ENCODE measurements at regions of chr19 and their contacts with region 1.

Region 1: GRCh38 chr19:41353466-41354342 is at the start of gene TGFB1:
- DNase-seq: peak; percentile 94
- H3K4me3 Mint-ChIP-seq: peak within 1 kb of the TSS; percentile 95
- H3K27ac Mint-ChIP-seq: peak within 1 kb of the TSS; percentile 94
- H3K4me1 Mint-ChIP-seq: peaks cover 58% of the 10 kb centered on the region
- H3K27me3 Mint-ChIP-seq: no peaks in the 10 kb centered on the region
- total RNA-seq, gene TGFB1: 108 to 110 TPM

Region 2: GRCh38 chr19:41310033-41310758 is 43.5 kb before region 1 on chr19 and contains the start of gene CCDC97:
- CTCF ChIA-PET with region 1: interaction called, 19 read pairs
- POLR2A ChIA-PET with region 1: interaction called, 4 read pairs
- intact Hi-C with region 1: loop called (anchors 1 kb)
- DNase-seq: peak; percentile 92
- H3K4me3 Mint-ChIP-seq: peak within 1 kb of the TSS; percentile 96
- H3K27ac Mint-ChIP-seq: peak within 1 kb of the TSS; percentile 96
- H3K4me1 Mint-ChIP-seq: peaks cover 65% of the 10 kb centered on the region
- H3K27me3 Mint-ChIP-seq: no peaks in the 10 kb centered on the region
- total RNA-seq, gene CCDC97: 20.5 to 23.4 TPM

Region 3: GRCh38 chr19:41327576-41328156 is 26.0 kb before region 1 on chr19:
- CTCF ChIA-PET with region 1: interaction called, 24 read pairs
- POLR2A ChIA-PET with region 1: interaction called, 43 read pairs
- intact Hi-C with region 1: loop called (anchors 1 kb)
- DNase-seq: peak; percentile 93
- H3K4me3 Mint-ChIP-seq: peak overlapping the region; percentile 80
- H3K27ac Mint-ChIP-seq: peak overlapping the region; percentile 96
- H3K4me1 Mint-ChIP-seq: peaks cover 56% of the 10 kb centered on the region
- H3K27me3 Mint-ChIP-seq: no peaks in the 10 kb centered on the region

Region 4: DNA sequence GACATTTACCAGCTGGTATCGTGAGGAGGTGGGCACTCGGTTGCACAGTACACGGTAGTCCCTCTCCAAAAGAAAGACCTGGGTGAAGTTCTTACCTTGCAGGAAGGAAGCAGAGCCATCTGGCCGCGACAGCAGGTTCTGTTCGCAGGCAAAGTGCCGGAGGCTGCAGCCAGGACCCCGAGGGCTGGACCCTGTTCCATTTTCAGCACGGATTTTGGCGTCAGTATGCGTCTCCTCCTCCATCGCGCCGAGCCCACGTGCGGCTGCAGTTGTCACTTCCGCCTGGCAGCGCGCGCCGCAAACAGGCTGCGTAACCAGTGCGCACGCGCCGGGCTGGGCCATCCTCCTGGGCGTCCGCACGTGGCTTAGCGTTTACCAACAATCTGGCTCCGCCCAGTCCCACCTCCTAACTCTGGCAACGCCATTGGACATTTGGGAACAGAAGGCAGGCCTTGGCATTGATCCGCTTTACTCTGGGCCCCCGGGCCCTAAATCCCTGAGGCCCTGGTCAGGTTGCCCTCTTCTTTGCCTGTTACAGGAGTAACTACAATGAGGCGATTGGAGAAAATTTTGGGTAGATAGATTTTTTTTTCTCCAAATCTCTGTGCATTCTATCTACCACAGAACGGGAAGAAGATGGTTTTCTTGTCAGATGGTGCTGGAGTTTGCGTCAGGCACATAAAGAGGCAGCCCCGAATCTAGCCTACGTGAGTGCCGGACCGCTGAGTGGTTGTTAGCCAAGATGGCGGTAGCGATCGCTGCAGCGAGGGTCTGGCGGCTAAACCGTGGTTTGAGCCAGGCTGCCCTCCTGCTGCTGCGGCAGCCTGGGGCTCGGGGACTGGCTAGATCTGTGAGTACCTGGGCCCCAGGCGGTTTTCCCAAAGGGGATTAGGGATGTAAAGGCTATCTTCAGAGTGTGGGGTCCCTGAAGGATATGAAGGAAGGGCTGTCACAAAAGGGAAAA is 43.7 kb after region 1 on chr19 and contains the starts of genes BCKDHA and EXOSC5:
- CTCF ChIA-PET with region 1: no interaction called
- POLR2A ChIA-PET with region 1: interaction called, 4 read pairs
- intact Hi-C with region 1: loop called (anchors 2 kb)
- DNase-seq: peak; percentile 99
- H3K4me3 Mint-ChIP-seq: peak within 1 kb of the TSS; percentile 96
- H3K27ac Mint-ChIP-seq: peak within 1 kb of the TSS; percentile 98
- H3K4me1 Mint-ChIP-seq: peaks cover 41% of the 10 kb centered on the region
- H3K27me3 Mint-ChIP-seq: no peaks in the 10 kb centered on the region
- total RNA-seq, gene BCKDHA: 17.4 to 23.2 TPM
- total RNA-seq, gene EXOSC5: 43.0 to 45.5 TPM